ENCODE measurements at regions of chr11 and their contacts with region 1.

Region 1: GRCh38 chr11:10208131-10208575 is 85.9 kb downstream of the SBF2 start:
- DNase-seq: no peak
- H3K4me3 ChIP-seq: no peak overlapping the region
- H3K27ac ChIP-seq: no peak overlapping the region
- H3K4me1 ChIP-seq: no peaks in the 10 kb centered on the region
- H3K27me3 ChIP-seq: no peaks in the 10 kb centered on the region
- CTCF ChIP-seq: peak; percentile 66 to 78 (median 68)
- POLR2A ChIP-seq: no peak

Region 2: DNA sequence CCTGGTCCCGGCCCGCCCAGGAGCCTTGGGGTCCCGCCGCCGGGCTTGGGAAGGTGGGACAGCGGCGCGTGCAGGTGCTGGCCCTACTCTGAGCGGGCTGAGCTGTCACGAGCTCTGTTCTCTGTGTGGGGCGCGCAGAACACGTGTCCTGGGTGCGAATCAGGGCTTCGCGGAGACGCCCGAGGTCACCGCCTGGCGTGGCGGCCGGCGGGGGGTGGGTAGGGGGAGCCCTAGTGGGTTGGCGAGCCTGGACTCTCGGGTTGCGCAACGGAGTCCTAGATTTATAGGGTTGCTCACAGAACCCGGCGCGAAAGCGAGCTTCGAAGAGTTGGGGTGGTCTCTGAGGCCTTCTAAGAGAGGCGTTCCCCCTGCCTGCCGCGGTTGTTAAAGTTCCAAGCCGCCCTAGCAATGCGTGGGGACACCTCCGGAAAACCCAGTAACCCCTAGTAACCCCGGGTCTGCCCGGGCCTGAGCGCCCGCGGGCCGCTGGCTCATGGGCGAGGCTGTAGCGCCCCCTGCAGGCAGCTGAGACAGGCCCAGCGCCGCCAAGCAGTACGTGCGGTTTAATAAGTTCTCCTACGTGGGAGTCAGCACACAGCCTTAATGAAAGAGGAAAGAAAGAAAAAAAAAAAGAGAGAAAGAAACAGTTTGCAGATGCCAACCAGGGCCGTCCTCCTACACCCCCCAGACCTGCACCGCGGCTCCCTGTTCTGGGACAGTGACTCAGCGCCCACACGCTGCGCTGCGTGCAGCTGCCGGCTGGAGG is 99.5 kb after region 1 on chr11:
- intact Hi-C with region 1: loop called (anchors 10 kb)
- DNase-seq: peak; percentile 86 to 90
- H3K4me3 ChIP-seq: peak overlapping the region; percentile 53 to 62
- H3K27ac ChIP-seq: peak overlapping the region; percentile 63 to 95
- H3K4me1 ChIP-seq: no peaks in the 10 kb centered on the region
- H3K27me3 ChIP-seq: no peaks in the 10 kb centered on the region
- CTCF ChIP-seq: peak; percentile 92 to 100 (median 98)
- POLR2A ChIP-seq: no peak

Measured in uterus (tissue), 4 donors.